Activated naive CD4-positive, alpha-beta T cell treated with anti-CD3 and anti-CD28 coated beads for 36 hours (primary cell): ENCODE measurements at regions of chr11 and their contacts with region 1.

Region 1: DNA sequence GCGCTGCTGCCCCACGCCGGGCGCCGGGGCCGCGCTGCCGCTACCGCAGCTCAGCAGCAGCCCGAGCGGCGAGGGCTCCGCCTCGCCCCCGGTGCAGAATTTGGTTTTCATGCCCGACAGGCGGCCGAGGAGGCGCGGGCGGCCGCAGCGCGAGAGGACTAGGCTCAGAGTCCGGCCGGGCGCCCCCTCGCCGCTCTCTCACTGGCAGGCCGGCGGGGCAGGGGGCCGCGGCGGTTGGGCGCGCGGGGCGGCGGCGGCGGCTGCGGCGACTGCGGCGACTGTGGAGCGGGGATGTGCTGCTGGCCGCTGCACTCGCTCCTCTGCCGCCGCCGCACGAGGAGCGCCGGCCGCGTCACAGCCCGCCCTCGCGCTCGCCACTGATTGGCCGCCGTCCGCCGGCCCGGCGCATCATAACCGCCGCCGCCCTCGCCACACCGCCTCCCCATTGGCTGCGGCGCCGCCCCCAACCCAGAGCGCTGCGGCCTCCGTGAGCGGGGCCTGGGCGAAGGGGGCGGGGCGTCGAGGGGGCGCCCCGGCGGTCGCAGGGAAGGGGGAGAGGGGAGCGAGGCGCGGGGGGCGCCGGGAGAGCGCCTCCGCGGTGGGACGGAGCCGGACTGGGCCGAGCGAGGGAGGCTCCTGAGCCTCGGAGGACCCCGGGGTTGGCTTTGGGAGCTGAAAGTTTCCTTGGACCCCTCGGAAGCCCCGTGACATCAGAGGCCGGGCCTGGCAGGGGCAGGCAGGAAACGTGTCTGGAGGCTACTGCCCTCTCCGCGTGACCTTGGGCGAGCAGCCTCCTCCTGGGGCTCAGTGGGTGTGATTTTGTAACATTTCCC is at the start of gene CHKA:
- DNase-seq: peak; percentile 87
- H3K4me3 Mint-ChIP-seq: peak within 1 kb of the TSS; percentile 73
- H3K27ac Mint-ChIP-seq: no peak within 1 kb of the TSS
- H3K4me1 Mint-ChIP-seq: peaks cover 7% of the 10 kb centered on the region
- H3K27me3 Mint-ChIP-seq: no peaks in the 10 kb centered on the region
- total RNA-seq, gene CHKA: 6.8 to 7.1 TPM

Region 2: GRCh38 chr11:68003846-68004550 is 117.3 kb before region 1 on chr11 and contains the start of gene UNC93B1:
- CTCF ChIA-PET with region 1: no interaction called
- intact Hi-C with region 1: loop called (anchors 10 kb)
- DNase-seq: peak; percentile 89
- H3K4me3 Mint-ChIP-seq: peak within 1 kb of the TSS; percentile 82
- H3K27ac Mint-ChIP-seq: no peak within 1 kb of the TSS
- H3K4me1 Mint-ChIP-seq: peaks cover 16% of the 10 kb centered on the region
- H3K27me3 Mint-ChIP-seq: no peaks in the 10 kb centered on the region
- total RNA-seq, gene UNC93B1: 18.4 to 19.0 TPM

Region 3: DNA sequence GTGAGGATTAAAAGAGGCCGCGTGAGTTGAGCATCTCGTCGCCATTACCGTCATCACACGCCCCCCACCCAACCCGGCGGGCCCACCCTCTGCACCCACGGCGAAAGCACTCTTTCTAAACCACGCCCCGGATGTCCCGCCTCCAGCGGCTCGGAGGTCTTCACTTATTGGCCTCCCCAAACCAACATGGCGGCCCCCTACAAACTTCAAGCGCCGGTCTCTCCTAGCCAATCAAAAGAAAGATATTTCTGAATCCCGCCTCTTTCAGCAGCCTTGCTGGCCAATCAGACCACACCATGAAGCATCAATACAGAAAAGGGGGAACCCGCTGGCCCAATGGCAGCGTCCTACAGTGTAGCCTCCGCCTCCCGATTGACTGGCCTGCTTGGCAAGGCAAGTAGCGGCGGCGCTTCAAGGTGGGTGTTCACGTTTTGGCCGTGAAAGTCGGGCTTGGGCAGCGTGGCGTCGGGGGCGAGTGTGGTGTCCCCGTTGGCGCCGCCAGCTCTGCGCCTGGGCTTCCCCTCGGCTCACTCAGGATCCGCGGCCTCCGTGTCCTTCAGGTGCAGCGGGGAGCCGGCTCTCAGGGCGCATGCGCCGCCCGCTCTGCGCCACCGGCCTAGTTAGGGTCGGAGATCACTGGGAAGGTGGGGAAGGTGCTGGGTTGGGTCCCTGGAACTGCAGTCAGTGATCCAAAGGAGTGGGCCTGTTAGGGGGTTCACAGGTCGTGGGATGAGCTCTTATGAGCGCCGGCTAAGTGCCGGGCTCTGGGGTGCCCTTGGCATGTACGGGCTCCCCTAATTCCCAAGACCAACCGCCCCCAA is 90.8 kb before region 1 on chr11 and contains the start of gene NDUFS8:
- CTCF ChIA-PET with region 1: no interaction called
- intact Hi-C with region 1: loop called (anchors 1 kb)
- DNase-seq: peak; percentile 98
- H3K4me3 Mint-ChIP-seq: peak within 1 kb of the TSS; percentile 91
- H3K27ac Mint-ChIP-seq: peak within 1 kb of the TSS; percentile 88
- H3K4me1 Mint-ChIP-seq: peaks cover 23% of the 10 kb centered on the region
- H3K27me3 Mint-ChIP-seq: no peaks in the 10 kb centered on the region
- total RNA-seq, gene NDUFS8: 142 to 162 TPM

Region 4: DNA sequence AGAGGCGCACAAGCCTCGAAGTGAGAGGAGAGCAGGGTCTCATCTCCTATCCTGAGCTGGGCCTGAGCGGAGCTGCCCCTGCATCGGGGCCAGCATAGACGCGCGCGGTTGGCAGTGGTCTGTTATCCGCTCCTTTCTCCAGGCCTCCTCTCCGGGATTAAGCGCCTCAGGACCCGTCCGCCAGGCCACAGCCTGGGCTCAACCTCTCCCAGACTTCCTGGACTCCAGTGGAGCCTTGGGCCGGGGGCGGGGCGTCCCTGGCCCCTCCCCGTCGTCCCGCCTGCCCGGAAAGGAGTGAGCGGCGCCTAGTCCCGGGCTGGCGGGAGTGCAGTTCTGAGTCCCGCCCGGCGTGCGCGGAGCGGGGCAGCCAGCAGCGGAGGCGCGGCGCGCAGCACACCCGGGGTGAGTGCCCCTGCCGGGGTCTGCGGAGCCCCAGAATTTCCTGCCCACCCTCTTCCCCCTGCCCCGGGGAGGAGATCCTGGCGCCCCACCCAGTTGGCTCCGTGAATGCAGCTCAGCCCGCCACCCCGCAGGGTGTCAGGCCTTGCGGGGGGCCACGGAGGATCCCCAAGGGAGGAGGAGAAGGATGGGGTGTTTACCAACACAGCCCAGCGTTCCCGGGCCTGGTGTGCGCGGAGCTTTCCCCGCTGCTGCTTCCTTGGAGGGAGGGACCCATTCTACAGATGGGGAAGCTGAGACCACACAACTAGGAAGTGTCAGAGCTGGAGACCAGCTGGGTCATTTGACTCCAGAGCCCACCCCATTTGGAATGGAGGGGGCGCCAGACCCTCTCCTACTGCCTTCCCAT is 82.4 kb before region 1 on chr11 and contains the start of gene TCIRG1:
- CTCF ChIA-PET with region 1: no interaction called
- intact Hi-C with region 1: loop called (anchors 1 kb)
- DNase-seq: peak; percentile 70
- H3K4me3 Mint-ChIP-seq: peak within 1 kb of the TSS; percentile 86
- H3K27ac Mint-ChIP-seq: peak within 1 kb of the TSS; percentile 88
- H3K4me1 Mint-ChIP-seq: peaks cover 24% of the 10 kb centered on the region
- H3K27me3 Mint-ChIP-seq: no peaks in the 10 kb centered on the region
- total RNA-seq, gene TCIRG1: 137 to 141 TPM

Region 5: GRCh38 chr11:68051191-68052144 is 69.8 kb before region 1 on chr11:
- CTCF ChIA-PET with region 1: no interaction called
- intact Hi-C with region 1: no loop called
- DNase-seq: no peak
- H3K4me3 Mint-ChIP-seq: no peak overlapping the region
- H3K27ac Mint-ChIP-seq: no peak overlapping the region
- H3K4me1 Mint-ChIP-seq: no peaks in the 10 kb centered on the region
- H3K27me3 Mint-ChIP-seq: no peaks in the 10 kb centered on the region

Region 6: DNA sequence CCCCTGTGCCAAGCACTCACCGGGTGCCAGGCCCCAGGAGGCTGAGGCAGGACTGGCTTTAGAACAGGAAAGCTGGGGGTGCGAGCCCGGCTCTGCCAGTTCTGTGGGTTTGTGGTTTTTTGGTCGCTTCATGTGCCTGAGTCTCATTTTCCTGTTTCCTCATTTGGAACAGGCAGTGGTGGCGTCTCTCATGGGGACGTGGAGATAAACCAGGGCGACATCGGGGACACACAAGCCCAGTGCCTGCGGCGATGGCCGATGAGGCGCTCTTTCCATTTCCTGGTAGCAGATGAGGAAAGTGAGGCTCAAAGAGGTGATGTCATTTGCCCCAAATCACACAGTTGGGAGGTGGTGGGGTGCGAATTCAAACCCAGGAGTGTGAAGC is 20.7 kb after region 1 on chr11:
- CTCF ChIA-PET with region 1: interaction called, 3 read pairs
- intact Hi-C with region 1: loop called (anchors 2 kb)
- DNase-seq: peak; percentile 79
- H3K4me3 Mint-ChIP-seq: no peak overlapping the region
- H3K27ac Mint-ChIP-seq: peak overlapping the region; percentile 61
- H3K4me1 Mint-ChIP-seq: peaks cover 11% of the 10 kb centered on the region
- H3K27me3 Mint-ChIP-seq: no peaks in the 10 kb centered on the region

Region 7: GRCh38 chr11:68206187-68206601 is 84.9 kb after region 1 on chr11:
- CTCF ChIA-PET with region 1: no interaction called
- intact Hi-C with region 1: loop called (anchors 2 kb)
- DNase-seq: peak; percentile 23
- H3K4me3 Mint-ChIP-seq: no peak overlapping the region
- H3K27ac Mint-ChIP-seq: no peak overlapping the region
- H3K4me1 Mint-ChIP-seq: peaks cover 73% of the 10 kb centered on the region
- H3K27me3 Mint-ChIP-seq: no peaks in the 10 kb centered on the region